ENCODE measurements at regions of chr3 and their contacts with region 1.

Region 1: GRCh38 chr3:10738688-10739372 is 77.2 kb upstream of the SLC6A11 start:
- DNase-seq: peak; percentile 76 to 88 (median 81)
- H3K4me3 ChIP-seq: peak overlapping the region; percentile 30 to 52 (median 33)
- H3K27ac ChIP-seq: no peak overlapping the region
- H3K4me1 ChIP-seq: peaks cover 0 to 2% (median 0%) of the 10 kb centered on the region in 3 donors
- H3K27me3 ChIP-seq: no peaks in the 10 kb centered on the region
- CTCF ChIP-seq: peak; percentile 84

Region 2: GRCh38 chr3:10349801-10350200 is 389.0 kb before region 1 on chr3:
- intact Hi-C with region 1: loop called (anchors 5 kb)
- DNase-seq: peak in 1 of 5 donors; percentile 49
- H3K4me3 ChIP-seq: no peak overlapping the region
- H3K27ac ChIP-seq: no peak overlapping the region
- H3K4me1 ChIP-seq: no peaks in the 10 kb centered on the region
- H3K27me3 ChIP-seq: no peaks in the 10 kb centered on the region
- CTCF ChIP-seq: no peak